Mammary epithelial cell (primary cell): ENCODE measurements at regions of chr1 and their contacts with region 1.

Region 1: GRCh38 chr1:167059045-167059808 is 30.9 kb downstream of the GPA33 start:
- DNase-seq: peak; percentile 37
- H3K4me3 ChIP-seq: no peak overlapping the region
- H3K27ac ChIP-seq: no peak overlapping the region
- H3K4me1 ChIP-seq: peaks cover 4% of the 10 kb centered on the region
- H3K27me3 ChIP-seq: no peaks in the 10 kb centered on the region
- CTCF ChIP-seq: peak; percentile 96 to 98

Region 2: DNA sequence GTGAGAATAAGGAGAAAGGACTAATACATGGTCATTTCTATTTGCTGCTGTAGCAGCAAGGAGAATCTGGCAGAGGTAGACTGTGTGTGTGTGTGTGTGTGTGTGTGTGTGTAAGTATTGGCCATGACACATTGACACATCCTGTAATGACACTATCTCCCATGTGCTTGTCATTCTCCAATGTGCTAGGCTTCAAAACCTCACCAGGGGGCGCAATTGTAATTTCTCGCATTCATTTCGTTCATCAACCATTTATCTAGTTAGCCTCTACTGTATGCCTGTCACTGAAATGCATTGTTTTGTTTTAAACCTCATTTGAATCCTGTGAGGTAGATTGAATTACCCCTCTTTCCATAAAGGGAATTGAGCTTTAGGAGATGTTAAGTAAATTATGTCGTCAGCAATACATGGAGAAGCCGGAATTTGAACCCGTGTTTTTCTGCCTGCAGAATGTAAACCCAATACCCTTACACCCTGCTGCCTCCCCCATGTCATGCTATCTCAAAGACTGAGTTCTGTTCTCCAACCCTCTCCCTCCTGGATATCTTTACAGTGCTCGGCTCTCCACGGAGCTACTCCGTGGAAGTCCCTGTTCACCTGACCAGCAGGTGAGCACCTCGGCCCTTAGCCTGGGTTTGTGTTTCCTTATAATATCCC is 1131.0 kb before region 1 on chr1:
- CTCF ChIA-PET with region 1: no interaction called
- dilution Hi-C with region 1: no loop called
- in situ Hi-C with region 1: no loop called
- intact Hi-C with region 1: loop called (anchors 5 kb)
- DNase-seq: peak; percentile 60
- H3K4me3 ChIP-seq: no peak overlapping the region
- H3K27ac ChIP-seq: no peak overlapping the region
- H3K4me1 ChIP-seq: no peaks in the 10 kb centered on the region
- H3K27me3 ChIP-seq: no peaks in the 10 kb centered on the region
- CTCF ChIP-seq: peak; percentile 64 to 78

Region 3: DNA sequence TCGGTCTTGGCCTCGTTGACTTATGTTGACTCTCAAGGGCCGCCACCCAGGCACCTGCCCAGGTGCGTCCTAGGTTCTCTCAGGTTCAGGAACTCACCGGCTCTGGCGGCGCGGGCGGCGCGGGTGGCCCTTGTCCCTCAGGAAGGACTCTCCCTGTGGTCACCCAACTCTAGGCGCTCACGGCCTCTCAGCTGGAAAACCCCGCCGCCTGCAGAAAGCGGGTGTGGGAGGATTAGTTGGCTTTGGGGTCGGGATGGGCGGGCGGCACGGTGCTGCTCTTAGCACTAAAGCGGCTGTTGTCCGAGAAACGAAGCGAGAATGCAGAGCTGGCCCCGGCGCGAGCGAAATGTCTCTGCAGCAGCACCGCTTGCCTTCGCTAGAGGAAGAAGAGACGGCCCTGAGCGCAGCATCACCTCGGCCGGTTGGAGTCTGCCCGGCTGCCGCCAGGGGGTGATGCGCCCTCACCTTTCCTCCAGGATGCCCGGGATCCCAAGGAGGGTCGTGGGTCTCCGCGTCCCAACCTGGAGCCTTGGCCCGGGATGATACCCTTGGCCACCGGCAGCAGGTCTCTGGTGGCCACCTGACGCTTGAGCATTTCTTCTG is 175.1 kb before region 1 on chr1:
- CTCF ChIA-PET with region 1: no interaction called
- dilution Hi-C with region 1: loop called (anchors 25 kb)
- in situ Hi-C with region 1: loop called (anchors 5 to 10 kb)
- intact Hi-C with region 1: loop called (anchors 1 kb)
- DNase-seq: peak; percentile 31
- H3K4me3 ChIP-seq: peak overlapping the region in 1 of 3 experiments; percentile 24
- H3K27ac ChIP-seq: no peak overlapping the region
- H3K4me1 ChIP-seq: peaks cover 5% of the 10 kb centered on the region
- H3K27me3 ChIP-seq: no peaks in the 10 kb centered on the region
- CTCF ChIP-seq: peak; percentile 69 to 87

Region 4: DNA sequence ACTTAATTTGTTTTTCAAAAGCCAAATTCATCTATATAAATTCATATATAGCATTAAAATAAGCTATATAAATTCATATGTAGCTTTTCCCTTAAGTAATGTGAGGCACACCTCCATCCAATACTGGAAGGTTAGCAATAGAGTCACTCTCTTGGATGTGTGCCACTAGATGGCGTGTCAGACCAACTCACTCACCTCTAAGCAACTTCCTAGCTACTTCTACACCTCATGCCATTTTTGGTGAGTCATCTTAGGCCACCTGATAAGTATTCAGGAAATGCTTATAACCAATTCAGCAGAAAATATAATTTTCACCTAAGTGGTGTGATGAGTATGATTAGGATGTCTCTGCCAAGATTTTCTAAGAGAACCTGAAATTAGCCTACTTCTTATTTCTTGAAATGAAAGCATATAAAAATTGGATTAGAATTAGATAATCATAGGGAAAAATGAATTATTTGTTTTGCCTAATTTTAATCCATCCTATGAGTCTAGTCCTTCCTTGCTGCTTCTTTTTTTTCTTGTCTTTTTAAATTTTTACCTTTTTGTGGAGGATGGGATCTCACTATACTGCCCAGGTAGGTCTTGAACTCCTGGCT is 148.7 kb before region 1 on chr1:
- CTCF ChIA-PET with region 1: interaction called, 13 read pairs
- dilution Hi-C with region 1: no loop called
- in situ Hi-C with region 1: loop called in 1 of 2 experiments (anchors 10 kb)
- intact Hi-C with region 1: loop called (anchors 1 kb)
- DNase-seq: peak; percentile 87
- H3K4me3 ChIP-seq: no peak overlapping the region
- H3K27ac ChIP-seq: no peak overlapping the region
- H3K4me1 ChIP-seq: peaks cover 3% of the 10 kb centered on the region
- H3K27me3 ChIP-seq: no peaks in the 10 kb centered on the region
- CTCF ChIP-seq: peak; percentile 69 to 78

Region 5: DNA sequence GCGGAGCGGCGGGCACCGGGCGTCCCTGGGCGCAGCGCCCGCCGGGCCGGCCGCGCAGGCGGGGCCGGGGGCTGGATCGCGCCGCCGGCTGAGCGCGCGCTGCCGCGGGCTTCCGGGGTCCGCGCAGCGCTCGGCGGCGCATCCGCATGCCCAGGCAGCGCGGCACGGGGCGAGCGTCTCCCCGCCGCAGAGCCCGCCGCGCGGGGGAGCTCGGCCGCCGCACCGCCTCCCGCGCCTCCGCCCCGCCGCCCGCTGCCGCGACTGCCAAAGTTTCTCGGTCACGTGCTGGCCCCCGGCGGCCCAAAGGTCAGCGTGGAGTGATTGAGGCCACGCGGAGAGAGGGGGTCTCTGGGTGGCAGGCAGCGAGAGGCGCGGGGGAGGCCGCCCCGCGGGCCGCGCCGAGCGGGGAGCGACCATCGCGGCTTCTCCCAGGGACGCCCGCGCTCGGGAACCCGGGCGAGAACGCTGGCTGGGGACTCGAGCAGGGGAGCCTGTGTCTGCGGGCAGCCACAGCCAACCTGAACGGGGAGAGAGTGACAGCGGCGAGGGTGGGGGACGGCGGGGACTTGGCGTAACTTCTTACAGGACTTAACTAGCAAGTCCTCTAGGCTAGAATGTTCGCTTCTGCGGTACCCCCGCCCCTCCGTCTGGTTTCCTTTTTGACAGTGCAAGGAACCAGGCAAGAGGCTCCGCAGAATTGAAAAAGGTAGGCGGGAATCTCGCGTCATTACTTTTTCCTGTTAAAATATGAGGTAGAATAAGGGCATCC is 83.7 kb before region 1 on chr1 and contains the start of gene ILDR2:
- CTCF ChIA-PET with region 1: no interaction called
- dilution Hi-C with region 1: no loop called
- in situ Hi-C with region 1: no loop called
- intact Hi-C with region 1: loop called (anchors 2 kb)
- DNase-seq: peak; percentile 14
- H3K4me3 ChIP-seq: peak within 1 kb of the TSS; percentile 54 to 62 (median 56)
- H3K27ac ChIP-seq: no peak within 1 kb of the TSS
- H3K4me1 ChIP-seq: peaks cover 2% of the 10 kb centered on the region
- H3K27me3 ChIP-seq: peaks cover 34% of the 10 kb centered on the region
- CTCF ChIP-seq: no peak
- total RNA-seq, gene ILDR2: not detected

Region 6: GRCh38 chr1:167210966-167211674 is 151.9 kb after region 1 on chr1:
- CTCF ChIA-PET with region 1: interaction called, 17 read pairs
- dilution Hi-C with region 1: no loop called
- in situ Hi-C with region 1: loop called in 1 of 2 experiments (anchors 10 kb)
- intact Hi-C with region 1: no loop called
- DNase-seq: peak; percentile 88
- H3K4me3 ChIP-seq: peak overlapping the region in 2 of 3 experiments; percentile 8 to 26
- H3K27ac ChIP-seq: peak overlapping the region; percentile 45
- H3K4me1 ChIP-seq: peaks cover 13% of the 10 kb centered on the region
- H3K27me3 ChIP-seq: no peaks in the 10 kb centered on the region
- CTCF ChIP-seq: no peak